ENCODE measurements at regions of chr17 and their contacts with region 1.

Region 1: GRCh38 chr17:66713533-66714042 is 121.3 kb upstream of the CACNG5 start:
- DNase-seq: peak; percentile 86
- ATAC-seq: peak; percentile 82
- H3K4me3 Mint-ChIP-seq: peak overlapping the region; percentile 33
- H3K27ac Mint-ChIP-seq: peak overlapping the region; percentile 98
- H3K4me1 Mint-ChIP-seq: peaks cover 81% of the 10 kb centered on the region
- H3K27me3 Mint-ChIP-seq: no peaks in the 10 kb centered on the region

Region 2: DNA sequence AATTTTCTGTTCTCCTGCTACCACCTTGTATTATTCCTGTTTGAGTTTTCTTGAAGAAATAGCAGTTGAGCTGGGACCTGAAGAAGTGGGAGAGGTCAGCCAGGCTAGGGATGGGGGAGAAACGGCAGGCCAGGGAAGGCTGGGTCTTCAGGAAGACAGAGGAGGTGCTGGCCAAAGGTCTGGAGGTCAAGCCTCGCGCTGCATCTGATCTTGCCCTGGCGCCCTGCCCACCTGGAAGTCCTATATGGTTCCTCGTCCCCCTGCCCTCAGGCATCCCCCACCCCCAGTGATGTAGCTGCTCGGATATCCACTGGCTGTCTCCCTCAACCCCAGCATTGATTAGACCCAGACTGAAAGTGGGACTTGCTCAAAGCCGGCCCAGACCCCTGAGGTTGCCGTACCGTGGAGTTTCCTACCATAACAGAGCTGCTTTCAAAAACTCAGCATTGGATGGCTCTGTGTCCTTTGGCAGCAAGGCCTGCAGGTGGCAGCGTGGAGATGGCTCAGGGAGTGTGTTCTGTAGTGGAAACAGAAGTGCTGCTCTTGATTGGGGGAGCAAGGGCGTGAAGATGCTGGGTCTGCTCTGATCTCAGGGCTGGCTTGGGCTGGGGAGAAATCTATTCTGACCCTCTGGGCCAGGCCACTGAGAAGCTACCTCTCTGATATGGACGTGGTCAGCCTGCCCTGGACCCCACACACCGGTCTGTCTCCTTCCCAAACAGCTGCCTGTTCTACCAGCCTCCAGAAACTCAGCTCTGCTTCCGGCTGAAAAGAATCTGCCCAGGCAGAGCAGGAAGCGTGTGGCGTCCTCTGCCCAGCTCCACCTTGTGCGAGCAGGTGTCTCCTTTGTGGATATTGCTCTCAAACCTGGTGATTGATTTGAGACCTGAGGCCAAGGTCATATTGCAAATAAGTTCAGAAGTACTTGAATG is 14.3 kb after region 1 on chr17:
- CTCF ChIA-PET with region 1: interaction called, 12 read pairs
- DNase-seq: peak; percentile 74
- ATAC-seq: peak; percentile 86
- H3K4me3 Mint-ChIP-seq: no peak overlapping the region
- H3K27ac Mint-ChIP-seq: peak overlapping the region; percentile 43
- H3K4me1 Mint-ChIP-seq: peaks cover 34% of the 10 kb centered on the region
- H3K27me3 Mint-ChIP-seq: no peaks in the 10 kb centered on the region